Endothelial cell of umbilical vein (primary cell): ENCODE measurements at regions of chr9 and their contacts with region 1.

Region 1: DNA sequence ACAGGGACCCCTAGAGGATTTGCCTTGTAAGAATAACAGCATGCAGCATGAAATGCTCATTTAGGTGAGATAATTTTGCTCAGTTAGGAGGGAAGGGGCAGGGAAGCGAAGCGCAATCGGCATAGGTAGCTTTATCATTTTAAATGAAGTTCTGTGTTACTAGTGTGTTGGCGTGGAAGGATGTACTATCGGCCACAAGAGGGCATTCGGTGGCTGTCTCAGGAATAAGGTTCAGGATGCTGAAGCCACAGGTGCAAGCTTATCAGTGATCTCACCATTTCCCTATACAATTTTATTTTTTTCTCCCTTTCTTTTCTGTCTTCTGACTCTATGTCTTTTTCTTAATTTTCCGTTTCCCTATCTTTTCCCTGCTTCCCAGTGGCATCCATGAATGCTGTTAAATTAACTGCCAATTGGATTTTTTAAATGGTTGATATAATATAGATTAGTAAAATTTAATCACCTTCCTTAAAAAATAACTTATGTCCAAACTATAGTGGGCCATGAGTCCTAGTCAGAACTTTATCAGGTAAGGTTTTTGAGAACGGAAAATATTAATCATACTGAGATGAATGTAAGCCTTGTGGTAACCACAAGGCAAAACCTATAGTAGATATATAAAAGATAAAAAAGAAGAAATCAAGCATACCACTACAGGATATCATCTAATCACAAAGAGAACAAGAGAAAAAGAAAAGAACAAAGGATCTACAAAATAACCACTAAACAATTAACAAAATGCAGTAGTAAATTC is 1.2 kb upstream of the INSL6 start:
- DNase-seq: peak; percentile 69
- H3K4me3 ChIP-seq: no peak overlapping the region
- H3K27ac ChIP-seq: no peak overlapping the region
- H3K4me1 ChIP-seq: no peaks in the 10 kb centered on the region
- H3K27me3 ChIP-seq: no peaks in the 10 kb centered on the region
- CTCF ChIP-seq: peak; percentile 64 to 73
- POLR2A ChIP-seq: no peak

Region 2: DNA sequence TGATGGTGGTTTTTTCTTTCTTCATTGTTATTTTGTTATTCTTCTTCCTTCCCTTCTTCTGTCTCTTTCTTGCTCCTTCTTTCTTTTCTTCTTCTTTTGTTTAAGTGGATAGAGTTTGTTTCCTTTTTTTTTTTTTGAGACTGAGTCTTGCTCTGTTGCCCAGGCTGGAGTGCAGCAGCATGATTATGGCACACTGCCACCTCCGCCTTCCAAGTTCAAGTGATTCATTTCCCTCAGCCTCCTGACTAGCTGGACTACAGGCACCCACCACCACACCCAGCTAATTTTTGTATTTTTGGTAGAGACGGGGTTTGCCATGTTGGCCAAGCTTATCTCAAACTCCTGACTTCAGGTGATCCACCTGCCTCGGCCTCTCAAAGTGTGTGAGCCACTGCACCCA is 161.2 kb before region 1 on chr9:
- CTCF ChIA-PET with region 1: no interaction called
- POLR2A ChIA-PET with region 1: no interaction called
- dilution Hi-C with region 1: no loop called
- intact Hi-C with region 1: no loop called
- DNase-seq: peak; percentile 17
- H3K4me3 ChIP-seq: no peak overlapping the region
- H3K27ac ChIP-seq: no peak overlapping the region
- H3K4me1 ChIP-seq: peaks cover 7% of the 10 kb centered on the region
- H3K27me3 ChIP-seq: no peaks in the 10 kb centered on the region
- CTCF ChIP-seq: no peak
- POLR2A ChIP-seq: no peak

Region 3: DNA sequence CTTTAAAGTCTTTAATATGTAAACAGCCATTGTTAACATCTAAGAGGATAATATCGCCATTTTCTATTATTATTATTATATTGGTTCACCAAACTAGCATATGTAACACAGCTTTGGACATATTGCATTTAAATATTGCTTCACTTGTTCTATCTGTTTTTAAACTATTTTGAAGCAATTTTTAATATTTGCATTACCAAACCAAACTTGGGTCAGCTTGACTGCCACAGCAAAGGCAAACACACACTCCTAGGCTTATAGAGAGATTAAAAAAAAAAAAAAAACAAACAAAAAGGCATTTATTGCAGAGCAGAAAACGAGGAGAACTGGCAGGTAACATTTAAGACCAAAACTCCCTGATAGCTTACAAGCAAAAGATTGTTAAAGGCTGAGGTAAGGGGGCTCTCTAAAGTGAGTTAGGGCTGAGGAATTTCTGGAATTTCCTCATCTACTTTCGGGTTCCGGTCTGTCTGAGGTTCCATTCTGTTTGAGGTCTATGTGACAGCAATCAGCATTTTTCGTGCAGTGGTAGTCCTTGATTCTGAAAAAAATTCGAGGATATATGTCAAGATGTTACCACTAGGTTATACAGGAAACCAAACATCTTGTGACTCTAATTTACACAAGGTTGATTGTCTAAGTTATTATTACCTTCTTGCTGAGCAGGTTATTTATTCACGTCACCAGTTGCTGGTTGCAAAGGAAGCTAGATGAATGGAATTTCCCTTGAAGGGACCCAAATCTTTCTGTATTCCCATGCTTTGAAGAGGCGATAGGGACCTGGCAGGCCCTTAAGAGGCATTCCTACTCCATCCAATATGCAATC is 82.5 kb after region 1 on chr9:
- CTCF ChIA-PET with region 1: interaction called, 16 read pairs
- POLR2A ChIA-PET with region 1: no interaction called
- dilution Hi-C with region 1: no loop called
- intact Hi-C with region 1: loop called (anchors 1 kb)
- DNase-seq: peak; percentile 90
- H3K4me3 ChIP-seq: no peak overlapping the region
- H3K27ac ChIP-seq: peak overlapping the region; percentile 99
- H3K4me1 ChIP-seq: peaks cover 24% of the 10 kb centered on the region
- H3K27me3 ChIP-seq: no peaks in the 10 kb centered on the region
- CTCF ChIP-seq: no peak
- POLR2A ChIP-seq: no peak

Region 4: DNA sequence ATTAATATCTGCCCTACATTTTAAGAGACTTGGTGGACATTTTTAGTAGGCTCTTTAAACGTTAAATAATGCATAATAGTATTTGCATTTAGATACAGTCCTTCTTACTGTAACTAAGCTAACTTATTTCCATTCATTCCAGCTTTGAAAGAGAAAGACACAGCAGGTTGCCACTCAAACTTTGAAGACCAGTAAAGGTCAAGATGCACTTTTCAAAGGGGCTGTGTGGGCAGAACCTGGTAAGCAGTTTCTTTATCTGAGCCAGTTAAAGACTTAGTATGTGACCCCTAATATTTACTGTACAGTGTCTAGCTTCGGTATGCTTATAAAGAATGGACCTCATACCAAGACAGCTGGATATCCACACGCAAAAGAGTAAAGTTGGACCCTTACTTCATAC is 230.4 kb after region 1 on chr9:
- CTCF ChIA-PET with region 1: interaction called, 37 read pairs
- POLR2A ChIA-PET with region 1: no interaction called
- dilution Hi-C with region 1: no loop called
- intact Hi-C with region 1: no loop called
- DNase-seq: no peak
- H3K4me3 ChIP-seq: no peak overlapping the region
- H3K27ac ChIP-seq: no peak overlapping the region
- H3K4me1 ChIP-seq: no peaks in the 10 kb centered on the region
- H3K27me3 ChIP-seq: no peaks in the 10 kb centered on the region
- CTCF ChIP-seq: no peak
- POLR2A ChIP-seq: no peak

Region 5: DNA sequence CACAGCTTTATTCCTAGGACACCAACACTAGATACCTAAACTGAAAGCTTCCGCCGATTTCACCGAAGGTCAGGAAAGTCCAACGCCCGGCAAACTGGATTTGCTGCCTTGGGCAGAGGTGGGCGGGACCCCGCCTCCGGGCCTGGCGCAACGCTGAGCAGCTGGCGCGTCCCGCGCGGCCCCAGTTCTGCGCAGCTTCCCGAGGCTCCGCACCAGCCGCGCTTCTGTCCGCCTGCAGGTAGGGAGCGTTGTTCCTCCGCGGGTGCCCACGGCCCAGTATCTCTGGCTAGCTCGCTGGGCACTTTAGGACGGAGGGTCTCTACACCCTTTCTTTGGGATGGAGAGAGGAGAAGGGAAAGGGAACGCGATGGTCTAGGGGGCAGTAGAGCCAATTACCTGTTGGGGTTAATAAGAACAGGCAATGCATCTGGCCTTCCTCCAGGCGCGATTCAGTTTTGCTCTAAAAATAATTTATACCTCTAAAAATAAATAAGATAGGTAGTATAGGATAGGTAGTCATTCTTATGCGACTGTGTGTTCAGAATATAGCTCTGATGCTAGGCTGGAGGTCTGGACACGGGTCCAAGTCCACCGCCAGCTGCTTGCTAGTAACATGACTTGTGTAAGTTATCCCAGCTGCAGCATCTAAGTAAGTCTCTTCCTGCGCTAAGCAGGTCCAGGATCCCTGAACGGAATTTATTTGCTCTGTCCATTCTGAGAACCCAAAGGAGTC is 263.9 kb after region 1 on chr9 and contains the start of gene CD274:
- CTCF ChIA-PET with region 1: interaction called, 39 read pairs
- POLR2A ChIA-PET with region 1: no interaction called
- dilution Hi-C with region 1: loop called (anchors 25 kb)
- intact Hi-C with region 1: no loop called
- DNase-seq: peak; percentile 92
- H3K4me3 ChIP-seq: peak within 1 kb of the TSS; percentile 38 to 98 (median 72)
- H3K27ac ChIP-seq: peak within 1 kb of the TSS; percentile 79
- H3K4me1 ChIP-seq: peaks cover 68% of the 10 kb centered on the region
- H3K27me3 ChIP-seq: no peaks in the 10 kb centered on the region
- CTCF ChIP-seq: peak; percentile 71 to 79
- POLR2A ChIP-seq: peak; percentile 82
- total RNA-seq, gene CD274: 26.8 and 29.7 TPM in 2 replicates

Region 6: GRCh38 chr9:5593904-5594303 is 407.3 kb after region 1 on chr9:
- CTCF ChIA-PET with region 1: interaction called, 178 read pairs
- POLR2A ChIA-PET with region 1: no interaction called
- dilution Hi-C with region 1: no loop called
- intact Hi-C with region 1: loop called (anchors 1 kb)
- DNase-seq: no peak
- H3K4me3 ChIP-seq: no peak overlapping the region
- H3K27ac ChIP-seq: no peak overlapping the region
- H3K4me1 ChIP-seq: peaks cover 6% of the 10 kb centered on the region
- H3K27me3 ChIP-seq: no peaks in the 10 kb centered on the region
- CTCF ChIP-seq: no peak
- POLR2A ChIP-seq: no peak